Natural killer cell (primary cell): ENCODE measurements at regions of chr2 and their contacts with region 1.

Region 1: GRCh38 chr2:231612179-231613053 is 19.8 kb downstream of the TEX44 start:
- DNase-seq: peak; percentile 84 to 92
- ATAC-seq: peak; percentile 84 to 88 (median 84)
- H3K4me3 ChIP-seq: no peak overlapping the region
- H3K4me3 Mint-ChIP-seq: peak overlapping the region; percentile 58
- H3K27ac ChIP-seq: peak overlapping the region; percentile 65
- H3K27ac Mint-ChIP-seq: peak overlapping the region in 1 of 2 donors; percentile 80
- H3K4me1 ChIP-seq: peaks cover 32% of the 10 kb centered on the region
- H3K4me1 Mint-ChIP-seq: peaks cover 11 to 25% of the 10 kb centered on the region in 2 donors
- H3K27me3 ChIP-seq: peaks cover 2% of the 10 kb centered on the region
- H3K27me3 Mint-ChIP-seq: peaks cover 0 to 20% of the 10 kb centered on the region in 2 donors
- CTCF ChIP-seq: peak; percentile 86

Region 2: DNA sequence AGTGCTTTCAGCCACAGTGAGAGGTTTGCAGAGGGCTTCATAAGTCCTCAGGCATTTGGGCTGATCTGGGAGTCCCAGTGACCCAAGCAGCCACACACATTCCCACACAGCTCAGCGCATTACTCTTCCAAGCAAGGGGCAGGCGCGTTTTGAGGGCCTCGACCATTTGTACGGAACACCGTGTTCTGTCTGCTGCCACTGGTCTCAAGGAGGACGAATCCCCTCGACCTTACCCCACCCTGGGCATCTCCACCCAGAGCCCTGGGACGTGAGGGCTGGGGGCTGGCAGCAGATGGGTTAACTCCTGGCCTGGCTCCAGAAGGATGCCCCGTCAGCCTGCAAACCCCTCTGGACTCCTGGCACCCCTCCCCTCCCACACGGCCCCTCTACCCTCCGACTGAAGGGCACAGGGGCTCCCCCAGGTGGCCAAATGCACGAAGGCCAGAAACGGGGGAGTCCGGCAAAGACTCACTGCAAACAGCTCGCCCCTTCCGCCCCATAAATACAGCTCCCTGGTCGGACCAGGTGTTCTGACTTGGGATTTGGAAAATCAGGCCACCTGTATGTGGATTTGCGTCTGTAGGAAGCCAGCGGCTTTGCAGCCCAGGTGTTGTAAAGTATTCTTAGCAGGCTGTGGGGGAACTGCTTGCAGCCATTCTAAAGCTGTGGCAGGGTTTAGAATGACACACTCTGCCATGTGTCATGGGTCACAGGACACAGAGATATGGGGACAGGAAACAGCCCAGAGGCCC is 62.3 kb after region 1 on chr2:
- intact Hi-C with region 1: loop called (anchors 2 kb)
- DNase-seq: peak; percentile 56 to 72
- ATAC-seq: peak; percentile 74 to 81 (median 78)
- H3K4me3 ChIP-seq: no peak overlapping the region
- H3K4me3 Mint-ChIP-seq: no peak overlapping the region
- H3K27ac ChIP-seq: peak overlapping the region; percentile 69
- H3K27ac Mint-ChIP-seq: peak overlapping the region in 1 of 2 donors; percentile 68
- H3K4me1 ChIP-seq: peaks cover 51% of the 10 kb centered on the region
- H3K4me1 Mint-ChIP-seq: peaks cover 13 to 21% of the 10 kb centered on the region in 2 donors
- H3K27me3 ChIP-seq: no peaks in the 10 kb centered on the region
- H3K27me3 Mint-ChIP-seq: no peaks in the 10 kb centered on the region
- CTCF ChIP-seq: peak; percentile 67

Region 3: GRCh38 chr2:232008907-232009638 is 396.7 kb after region 1 on chr2:
- intact Hi-C with region 1: no loop called
- DNase-seq: no peak
- ATAC-seq: no peak
- H3K4me3 ChIP-seq: no peak overlapping the region
- H3K4me3 Mint-ChIP-seq: no peak overlapping the region
- H3K27ac ChIP-seq: no peak overlapping the region
- H3K27ac Mint-ChIP-seq: no peak overlapping the region
- H3K4me1 ChIP-seq: no peaks in the 10 kb centered on the region
- H3K4me1 Mint-ChIP-seq: peaks cover 15 to 24% of the 10 kb centered on the region in 2 donors
- H3K27me3 ChIP-seq: no peaks in the 10 kb centered on the region
- H3K27me3 Mint-ChIP-seq: no peaks in the 10 kb centered on the region
- CTCF ChIP-seq: no peak